Breast epithelium (tissue), 4 donors: ENCODE measurements at regions of chr7 and their contacts with region 1.

Region 1: DNA sequence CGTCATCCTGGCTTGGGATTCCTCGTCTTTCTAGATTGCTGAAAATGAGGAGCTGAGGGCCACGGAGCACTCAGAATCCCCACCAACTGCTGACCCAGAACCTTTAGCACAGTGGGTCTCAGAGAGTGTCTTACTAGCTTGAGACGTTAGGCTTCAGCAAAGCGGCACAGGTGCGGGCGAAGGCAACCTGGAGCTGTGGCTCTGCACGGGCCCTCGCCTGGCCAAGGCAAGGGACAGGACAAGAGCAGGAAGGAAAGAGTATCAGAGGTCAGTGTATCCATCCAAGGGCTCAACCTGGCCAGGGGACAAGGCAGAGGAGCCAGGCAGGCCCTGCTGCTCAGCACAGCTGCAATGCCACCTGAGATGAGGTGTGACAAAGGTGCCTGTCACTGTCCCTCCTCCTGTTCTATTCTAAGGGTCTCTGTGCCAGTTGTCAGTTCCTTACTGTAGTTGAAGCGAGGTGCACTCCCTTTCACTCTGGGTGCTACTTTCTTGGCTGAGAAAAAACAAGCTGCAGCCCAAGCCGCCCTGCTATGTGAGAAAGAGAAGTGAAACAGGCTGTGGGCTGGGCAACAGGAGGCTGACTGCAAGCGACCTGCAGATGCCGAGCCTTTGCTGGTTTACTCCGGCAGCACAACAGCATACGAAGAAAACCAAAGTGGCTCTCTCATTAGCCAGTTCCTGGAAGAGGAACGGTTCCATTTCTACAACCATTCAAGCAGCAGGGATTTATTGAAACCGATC is 33.3 kb upstream of the KDM7A start:
- DNase-seq: no peak
- H3K4me3 ChIP-seq: no peak overlapping the region
- H3K27ac ChIP-seq: no peak overlapping the region
- H3K4me1 ChIP-seq: no peaks in the 10 kb centered on the region
- H3K27me3 ChIP-seq: no peaks in the 10 kb centered on the region
- CTCF ChIP-seq: no peak
- POLR2A ChIP-seq: no peak

Region 2: GRCh38 chr7:138670594-138670993 is 1539.4 kb before region 1 on chr7:
- intact Hi-C with region 1: no loop called
- DNase-seq: no peak
- H3K4me3 ChIP-seq: no peak overlapping the region
- H3K27ac ChIP-seq: no peak overlapping the region
- H3K4me1 ChIP-seq: no peaks in the 10 kb centered on the region
- H3K27me3 ChIP-seq: no peaks in the 10 kb centered on the region
- CTCF ChIP-seq: no peak
- POLR2A ChIP-seq: no peak

Region 3: GRCh38 chr7:139936760-139937310 is 273.2 kb before region 1 on chr7:
- intact Hi-C with region 1: loop called (anchors 5 kb)
- DNase-seq: no peak
- H3K4me3 ChIP-seq: no peak overlapping the region
- H3K27ac ChIP-seq: no peak overlapping the region
- H3K4me1 ChIP-seq: no peaks in the 10 kb centered on the region
- H3K27me3 ChIP-seq: no peaks in the 10 kb centered on the region
- CTCF ChIP-seq: no peak
- POLR2A ChIP-seq: no peak